OCI-LY7 (cell line): ENCODE measurements at regions of chr17 and their contacts with region 1.

Region 1: GRCh38 chr17:34542700-34543336 is 36.6 kb upstream of the TMEM132E start:
- DNase-seq: peak; percentile 46
- H3K4me3 ChIP-seq: no peak overlapping the region
- H3K27ac ChIP-seq: no peak overlapping the region
- H3K4me1 ChIP-seq: no peaks in the 10 kb centered on the region
- CTCF ChIP-seq: peak; percentile 100

Region 2: DNA sequence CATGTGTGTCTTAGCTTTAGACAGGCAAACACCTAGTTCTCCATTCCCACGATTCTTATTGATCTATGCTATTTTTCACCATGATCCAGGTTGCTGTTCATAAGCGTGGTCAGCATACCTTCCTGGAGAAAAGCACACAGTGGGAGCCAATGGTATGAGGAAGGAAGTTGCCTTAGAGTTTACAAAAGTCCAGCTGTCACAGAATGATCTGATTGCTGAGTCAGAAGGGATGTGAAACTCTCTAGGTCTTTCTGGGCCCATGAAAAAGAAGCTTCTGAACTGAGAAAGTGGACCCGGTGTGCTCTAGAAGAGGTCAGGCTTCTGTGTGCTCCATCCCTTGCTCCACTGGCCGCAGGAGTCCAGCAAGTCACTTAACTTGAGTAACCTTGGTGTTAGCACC is 108.8 kb before region 1 on chr17:
- CTCF ChIA-PET with region 1: no interaction called
- POLR2A ChIA-PET with region 1: no interaction called
- intact Hi-C with region 1: loop called (anchors 10 kb)
- DNase-seq: peak; percentile 18
- H3K4me3 ChIP-seq: no peak overlapping the region
- H3K27ac ChIP-seq: no peak overlapping the region
- H3K4me1 ChIP-seq: peaks cover 5% of the 10 kb centered on the region
- CTCF ChIP-seq: no peak

Region 3: GRCh38 chr17:34626141-34626681 is 83.4 kb after region 1 on chr17:
- CTCF ChIA-PET with region 1: no interaction called
- POLR2A ChIA-PET with region 1: no interaction called
- intact Hi-C with region 1: no loop called
- DNase-seq: no peak
- H3K4me3 ChIP-seq: no peak overlapping the region
- H3K27ac ChIP-seq: no peak overlapping the region
- H3K4me1 ChIP-seq: no peaks in the 10 kb centered on the region
- CTCF ChIP-seq: no peak

Region 4: GRCh38 chr17:34637548-34638525 is 95.0 kb after region 1 on chr17:
- CTCF ChIA-PET with region 1: no interaction called
- POLR2A ChIA-PET with region 1: no interaction called
- intact Hi-C with region 1: loop called (anchors 2 kb)
- DNase-seq: peak; percentile 63
- H3K4me3 ChIP-seq: no peak overlapping the region
- H3K27ac ChIP-seq: no peak overlapping the region
- H3K4me1 ChIP-seq: no peaks in the 10 kb centered on the region
- CTCF ChIP-seq: peak; percentile 80

Region 5: DNA sequence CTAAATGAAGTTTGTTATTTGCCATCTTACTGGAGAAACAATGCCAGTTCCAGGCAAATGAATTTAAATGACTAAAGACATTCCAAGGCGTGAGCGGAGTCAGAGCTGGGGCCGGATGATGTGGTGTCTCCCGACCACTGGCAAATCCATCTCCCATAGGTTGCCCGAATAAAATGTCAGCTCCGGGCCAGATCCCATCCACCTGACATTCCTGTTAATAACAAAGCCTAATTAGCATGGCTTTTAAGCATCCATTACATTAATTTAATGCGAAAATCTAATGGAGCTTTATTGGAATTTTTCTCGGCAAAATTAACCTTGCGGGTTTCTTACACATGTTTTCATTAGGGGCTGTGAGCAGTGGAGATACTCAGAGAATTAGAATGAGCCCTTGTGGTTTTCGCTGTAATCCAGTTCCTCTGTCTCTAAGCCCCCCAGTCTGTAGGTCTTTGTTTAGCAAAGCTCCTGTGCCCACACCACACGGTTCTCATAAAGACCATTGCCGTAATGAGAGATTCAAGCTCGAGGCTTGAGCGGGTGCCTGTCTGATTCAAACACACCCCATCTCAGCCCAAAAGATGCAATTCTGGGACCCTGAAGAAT is 295.2 kb after region 1 on chr17:
- CTCF ChIA-PET with region 1: no interaction called
- POLR2A ChIA-PET with region 1: no interaction called
- intact Hi-C with region 1: no loop called
- DNase-seq: no peak
- H3K4me3 ChIP-seq: no peak overlapping the region
- H3K27ac ChIP-seq: no peak overlapping the region
- H3K4me1 ChIP-seq: peaks cover 68% of the 10 kb centered on the region
- CTCF ChIP-seq: no peak

Region 6: GRCh38 chr17:34892461-34893249 is 349.8 kb after region 1 on chr17:
- CTCF ChIA-PET with region 1: no interaction called
- POLR2A ChIA-PET with region 1: no interaction called
- intact Hi-C with region 1: loop called (anchors 1 kb)
- DNase-seq: peak; percentile 47
- H3K4me3 ChIP-seq: no peak overlapping the region
- H3K27ac ChIP-seq: no peak overlapping the region
- H3K4me1 ChIP-seq: no peaks in the 10 kb centered on the region
- CTCF ChIP-seq: peak; percentile 89